ENCODE measurements at regions of chr19 and their contacts with region 1.

Region 1: DNA sequence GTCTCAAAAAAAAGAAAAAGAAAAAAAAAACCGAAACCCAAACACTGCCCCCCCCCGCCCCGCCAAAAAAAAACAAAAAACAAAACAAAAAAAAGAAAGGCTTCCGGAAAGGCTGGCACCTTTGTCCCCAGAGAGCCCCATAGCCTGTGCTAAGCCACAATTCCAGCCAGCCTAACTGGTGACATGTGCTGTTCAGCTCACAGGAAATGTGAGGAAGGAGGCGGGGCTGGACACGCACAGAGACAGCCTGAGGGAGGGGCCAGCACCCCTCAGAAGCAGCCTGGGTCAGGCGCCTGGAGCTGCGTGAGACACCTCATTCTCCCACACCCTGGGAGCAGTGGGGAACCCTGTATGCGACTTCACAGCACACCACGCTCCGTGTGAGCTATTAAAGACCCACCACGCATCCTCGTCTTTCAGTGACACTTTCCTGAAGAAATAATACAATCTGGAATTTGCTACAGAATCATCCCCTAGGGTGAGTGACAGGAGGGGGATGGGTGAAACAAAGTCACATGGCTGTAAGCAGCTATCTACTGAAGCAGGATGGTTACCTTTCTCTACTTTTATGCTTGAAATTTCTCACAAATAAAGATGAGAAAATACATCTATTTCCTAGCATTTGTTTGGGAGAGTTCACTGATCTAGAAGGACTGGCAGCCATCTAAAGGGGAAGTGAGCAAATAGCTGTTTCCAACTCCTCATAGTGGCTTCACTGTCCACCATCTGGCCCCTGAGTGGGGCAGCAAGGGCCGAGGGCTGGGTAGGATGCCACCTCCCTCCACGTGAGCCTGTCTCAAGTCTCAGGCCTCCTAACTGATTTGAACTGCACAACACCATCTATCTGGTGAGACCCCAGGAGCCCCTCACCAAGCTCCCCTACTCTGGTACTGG is 12.3 kb upstream of the SLC35E1 start:
- DNase-seq: peak; percentile 64 to 77 (median 72)
- H3K4me3 ChIP-seq: no peak overlapping the region
- H3K27ac ChIP-seq: peak overlapping the region in 1 of 2 donors; percentile 1
- H3K4me1 ChIP-seq: peaks cover 22% of the 10 kb centered on the region
- H3K27me3 ChIP-seq: no peaks in the 10 kb centered on the region
- CTCF ChIP-seq: no peak
- EP300 ChIP-seq: no peak
- POLR2A ChIP-seq: no peak

Region 2: DNA sequence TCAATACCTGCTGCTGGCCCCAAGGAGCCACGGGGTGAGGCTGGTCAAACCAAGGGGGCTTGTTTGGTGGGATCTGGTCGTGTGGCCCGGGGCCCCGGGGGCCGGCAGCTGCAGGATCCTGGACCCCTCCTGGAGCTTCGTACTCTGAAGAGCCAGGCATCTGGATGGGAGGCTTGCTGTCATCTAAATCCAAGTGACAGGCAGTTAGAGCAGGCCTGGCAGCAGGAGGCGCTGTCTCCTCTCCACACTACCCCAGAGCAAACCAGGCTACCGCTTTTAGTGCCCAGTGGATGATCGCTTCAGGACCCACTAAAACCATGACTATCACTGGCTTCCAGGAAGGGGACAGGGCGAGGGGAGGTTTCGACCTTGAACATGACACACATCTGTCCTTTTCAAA is 56.4 kb before region 1 on chr19:
- intact Hi-C with region 1: no loop called
- DNase-seq: no peak
- H3K4me3 ChIP-seq: no peak overlapping the region
- H3K27ac ChIP-seq: no peak overlapping the region
- H3K4me1 ChIP-seq: no peaks in the 10 kb centered on the region
- H3K27me3 ChIP-seq: no peaks in the 10 kb centered on the region
- CTCF ChIP-seq: no peak
- EP300 ChIP-seq: no peak
- POLR2A ChIP-seq: no peak

Region 3: GRCh38 chr19:16620018-16620417 is 35.5 kb after region 1 on chr19:
- intact Hi-C with region 1: loop called in 2 of 4 experiments (anchors 5 kb)
- DNase-seq: peak in 1 of 5 donors; percentile 30
- H3K4me3 ChIP-seq: no peak overlapping the region
- H3K27ac ChIP-seq: no peak overlapping the region
- H3K4me1 ChIP-seq: peaks cover 12% of the 10 kb centered on the region
- H3K27me3 ChIP-seq: no peaks in the 10 kb centered on the region
- CTCF ChIP-seq: no peak
- EP300 ChIP-seq: no peak
- POLR2A ChIP-seq: no peak

Region 4: DNA sequence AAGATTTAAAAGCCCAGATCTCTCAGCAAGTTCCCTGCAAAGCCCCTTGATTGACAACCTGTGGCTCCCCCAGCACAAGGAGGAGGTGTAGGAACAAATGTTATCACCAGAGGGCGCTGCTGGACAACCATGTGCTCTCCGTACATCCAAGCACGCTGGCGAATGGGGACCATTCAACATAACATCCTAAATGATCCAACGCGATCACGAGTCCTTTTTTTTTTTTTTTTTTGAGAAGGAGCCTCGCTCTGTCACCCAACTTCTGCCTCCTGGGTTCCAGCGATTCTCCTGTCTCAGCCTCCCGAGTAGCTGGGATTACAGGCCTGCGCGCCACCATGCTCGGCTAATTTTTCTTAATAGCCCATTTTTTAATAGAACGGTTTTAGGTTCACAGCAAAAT is 187.1 kb after region 1 on chr19:
- intact Hi-C with region 1: loop called in 1 of 4 experiments (anchors 1 kb)
- DNase-seq: peak; percentile 72 to 85 (median 76)
- H3K4me3 ChIP-seq: no peak overlapping the region
- H3K27ac ChIP-seq: no peak overlapping the region
- H3K4me1 ChIP-seq: no peaks in the 10 kb centered on the region
- H3K27me3 ChIP-seq: no peaks in the 10 kb centered on the region
- CTCF ChIP-seq: peak; percentile 53 to 82 (median 70)
- EP300 ChIP-seq: no peak
- POLR2A ChIP-seq: no peak

Measured in ovary (tissue), 10 donors.